PC-3 (cell line): ENCODE measurements at regions of chr3 and their contacts with region 1.

Region 1: GRCh38 chr3:187112934-187113793 is 26.1 kb downstream of the RPL39L start:
- DNase-seq: peak; percentile 66
- ATAC-seq: 0 out of 2 replicates have a peak, but pooled peaks have one; percentile 20
- H3K4me3 ChIP-seq: no peak overlapping the region
- H3K27ac ChIP-seq: no peak overlapping the region
- H3K4me1 ChIP-seq: no peaks in the 10 kb centered on the region
- H3K27me3 ChIP-seq: no peaks in the 10 kb centered on the region
- CTCF ChIP-seq: peak; percentile 86

Region 2: DNA sequence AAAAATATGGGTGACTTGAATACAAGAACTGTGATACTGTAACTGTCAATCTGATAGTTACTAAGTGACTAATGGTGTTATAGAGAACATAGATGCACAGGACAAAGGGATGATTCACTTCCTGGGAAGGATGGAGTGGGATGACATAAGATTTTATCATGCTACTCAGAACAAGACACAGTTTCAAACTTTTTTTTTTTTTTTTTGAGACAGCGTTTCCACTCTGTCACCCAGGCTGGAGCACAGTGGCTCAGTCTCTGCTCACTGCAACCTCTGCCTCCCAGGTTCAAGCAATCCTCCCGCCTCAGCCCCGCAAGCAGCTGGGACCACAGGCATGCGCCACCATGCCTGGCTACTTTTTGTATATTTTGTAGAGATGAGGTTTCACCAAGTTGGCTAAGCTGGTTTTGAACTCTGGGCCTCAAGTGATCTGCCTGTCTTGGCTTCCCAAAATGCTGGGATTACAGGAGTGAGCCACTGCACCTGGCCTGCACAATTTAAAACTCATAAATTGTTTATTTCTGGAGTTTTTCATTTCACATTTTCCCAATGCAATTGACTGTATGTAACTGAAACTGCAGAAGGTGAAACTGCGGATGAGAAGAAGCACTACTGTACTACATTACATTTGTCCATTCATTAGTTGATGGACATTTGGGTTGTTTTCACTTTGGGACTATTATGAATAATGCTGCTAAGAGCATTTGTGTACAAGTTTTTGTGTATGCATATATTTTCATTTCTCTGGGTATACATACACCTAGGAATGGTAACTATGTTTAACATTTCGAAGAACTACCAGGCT is 230.1 kb before region 1 on chr3:
- CTCF ChIA-PET with region 1: no interaction called
- POLR2A ChIA-PET with region 1: no interaction called
- intact Hi-C with region 1: no loop called
- DNase-seq: peak; percentile 88
- ATAC-seq: peak; percentile 98
- H3K4me3 ChIP-seq: no peak overlapping the region
- H3K27ac ChIP-seq: peak overlapping the region; percentile 9; the same call in 1 of the 2 replicates
- H3K4me1 ChIP-seq: peaks cover 13% of the 10 kb centered on the region
- H3K27me3 ChIP-seq: no peaks in the 10 kb centered on the region
- CTCF ChIP-seq: no peak

Region 3: GRCh38 chr3:187164885-187165543 is 51.9 kb after region 1 on chr3:
- CTCF ChIA-PET with region 1: interaction called, 41 read pairs
- POLR2A ChIA-PET with region 1: interaction called, 3 read pairs
- intact Hi-C with region 1: loop called (anchors 1 kb)
- DNase-seq: peak; percentile 82
- ATAC-seq: peak; percentile 81
- H3K4me3 ChIP-seq: no peak overlapping the region
- H3K27ac ChIP-seq: no peak overlapping the region
- H3K4me1 ChIP-seq: peaks cover 5% of the 10 kb centered on the region; the same call in 1 of the 2 replicates
- H3K27me3 ChIP-seq: 0 out of 2 replicates have a peak, but pooled peaks cover 3% of the 10 kb centered on the region
- CTCF ChIP-seq: peak; percentile 80